H1 (cell line): ENCODE measurements at regions of chr1 and their contacts with region 1.

Region 1: GRCh38 chr1:153649863-153650235 is 8.7 kb upstream of the SNAPIN start:
- DNase-seq: no peak
- H3K4me3 ChIP-seq: no peak overlapping the region
- H3K27ac ChIP-seq: no peak overlapping the region
- H3K4me1 ChIP-seq: peaks cover 0 to 3% (median 0%) of the 10 kb centered on the region in 4 experiments; a peak in 1 of 7 replicates
- H3K27me3 ChIP-seq: no peaks in the 10 kb centered on the region
- CTCF ChIP-seq: no peak
- EP300 ChIP-seq: no peak
- POLR2A ChIP-seq: no peak
- RAD21 ChIP-seq: no peak

Region 2: DNA sequence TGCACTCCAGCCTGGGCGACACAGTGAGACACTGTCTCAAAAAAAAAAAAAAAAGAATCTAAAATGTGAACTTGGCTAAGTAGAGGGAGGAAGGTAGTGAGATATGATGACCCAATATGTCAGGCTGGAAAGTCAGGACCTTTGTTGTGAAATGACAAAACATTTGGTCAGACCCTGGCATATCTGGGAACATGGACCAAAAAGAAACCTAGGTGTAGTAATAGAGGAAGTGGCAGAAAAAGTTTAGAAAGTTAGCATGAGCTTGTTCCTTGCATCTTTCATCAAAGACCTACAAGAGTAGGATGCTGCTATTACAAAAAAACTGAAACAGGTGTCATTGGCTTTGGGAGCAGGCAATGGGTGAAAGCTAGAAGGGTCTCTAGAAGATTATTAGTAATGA is 93.5 kb before region 1 on chr1:
- CTCF ChIA-PET with region 1: no interaction called
- POLR2A ChIA-PET with region 1: no interaction called
- DNase-seq: no peak
- H3K4me3 ChIP-seq: no peak overlapping the region
- H3K27ac ChIP-seq: no peak overlapping the region
- H3K4me1 ChIP-seq: no peaks in the 10 kb centered on the region; a peak in 1 of 7 replicates
- H3K27me3 ChIP-seq: no peaks in the 10 kb centered on the region; a peak in 2 of 7 replicates
- CTCF ChIP-seq: no peak
- EP300 ChIP-seq: no peak
- POLR2A ChIP-seq: no peak
- RAD21 ChIP-seq: no peak

Region 3: GRCh38 chr1:153583976-153584375 is 65.9 kb before region 1 on chr1:
- CTCF ChIA-PET with region 1: no interaction called
- POLR2A ChIA-PET with region 1: no interaction called
- DNase-seq: no peak
- H3K4me3 ChIP-seq: no peak overlapping the region
- H3K27ac ChIP-seq: no peak overlapping the region
- H3K4me1 ChIP-seq: no peaks in the 10 kb centered on the region
- H3K27me3 ChIP-seq: no peaks in the 10 kb centered on the region
- CTCF ChIP-seq: no peak
- EP300 ChIP-seq: no peak
- POLR2A ChIP-seq: no peak
- RAD21 ChIP-seq: no peak

Region 4: DNA sequence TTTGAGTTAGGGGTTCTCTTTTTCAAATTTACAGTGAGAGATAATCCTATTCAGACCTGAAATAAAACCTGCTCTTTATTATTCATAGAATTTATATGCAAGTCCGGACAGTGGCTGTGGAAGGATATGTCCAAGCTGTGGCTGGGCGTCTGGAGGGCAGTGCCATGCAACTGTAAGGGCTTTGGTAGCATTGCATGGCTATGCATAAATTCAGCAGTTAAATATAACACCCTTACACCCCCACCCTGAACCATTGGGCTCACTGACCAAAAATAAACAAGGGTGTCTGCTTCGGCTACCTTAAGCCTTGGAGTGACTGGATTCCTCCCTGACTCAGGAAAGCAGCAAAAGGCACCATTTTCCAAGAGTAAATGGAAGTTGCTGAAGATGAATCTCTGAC is 10.6 kb before region 1 on chr1:
- CTCF ChIA-PET with region 1: interaction called, 13 read pairs
- POLR2A ChIA-PET with region 1: interaction called, 343 read pairs
- DNase-seq: no peak
- H3K4me3 ChIP-seq: no peak overlapping the region
- H3K27ac ChIP-seq: no peak overlapping the region
- H3K4me1 ChIP-seq: no peaks in the 10 kb centered on the region
- H3K27me3 ChIP-seq: no peaks in the 10 kb centered on the region
- CTCF ChIP-seq: no peak
- EP300 ChIP-seq: no peak
- POLR2A ChIP-seq: no peak
- RAD21 ChIP-seq: no peak